MCF 10A (cell line): ENCODE measurements at regions of chr1 and their contacts with region 1.

Region 1: GRCh38 chr1:13662493-13662892 is 37.5 kb upstream of the PRDM2 start:
- DNase-seq: peak; percentile 29
- H3K4me3 Mint-ChIP-seq: no peak overlapping the region
- H3K27ac Mint-ChIP-seq: peak overlapping the region; percentile 5
- H3K4me1 Mint-ChIP-seq: peaks cover 36% of the 10 kb centered on the region
- H3K27me3 Mint-ChIP-seq: no peaks in the 10 kb centered on the region
- CTCF ChIP-seq: no peak

Region 2: DNA sequence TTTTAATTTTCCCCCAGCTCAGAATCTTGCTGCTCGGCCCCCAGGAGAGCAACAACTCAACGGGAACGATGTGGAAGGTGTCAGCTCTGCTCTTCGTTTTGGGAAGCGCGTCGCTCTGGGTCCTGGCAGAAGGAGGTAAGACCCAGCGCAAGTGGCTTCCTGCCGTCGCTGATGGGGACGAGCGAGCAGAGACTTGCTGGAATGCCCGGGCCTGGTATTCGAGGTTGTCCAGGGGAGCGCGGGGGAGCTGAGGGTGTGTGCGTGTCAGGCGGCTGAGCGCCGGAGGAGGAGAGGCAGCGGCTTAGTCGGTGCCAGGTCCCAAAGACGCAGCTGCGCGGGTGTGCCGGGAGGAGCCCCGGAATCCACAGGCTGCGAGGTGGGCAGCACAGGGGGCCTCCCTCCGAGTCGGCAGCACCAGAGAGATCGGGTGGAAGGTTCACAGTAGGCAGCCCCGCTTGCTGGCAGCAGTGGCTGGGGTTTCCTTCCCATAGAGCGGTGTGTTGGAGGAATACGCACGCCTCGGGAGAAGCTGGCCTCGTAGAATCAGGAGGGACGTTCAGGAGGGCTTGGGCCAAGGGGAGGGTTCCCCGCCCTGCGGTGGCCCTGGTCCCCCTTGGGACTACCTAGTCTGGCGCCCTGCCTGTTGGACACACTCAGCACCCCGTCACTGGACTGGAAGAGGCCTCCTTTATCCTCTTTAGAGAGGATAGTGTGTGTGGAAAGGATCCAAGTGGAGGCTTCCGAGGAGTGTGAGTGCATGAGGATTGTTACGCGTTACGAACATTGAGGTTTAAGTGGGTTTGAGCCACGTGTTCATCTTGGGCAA is 78.3 kb before region 1 on chr1:
- CTCF ChIA-PET with region 1: interaction called, 3 read pairs
- POLR2A ChIA-PET with region 1: interaction called, 18 read pairs
- intact Hi-C with region 1: no loop called
- DNase-seq: peak; percentile 52
- H3K4me3 Mint-ChIP-seq: peak overlapping the region; percentile 85
- H3K27ac Mint-ChIP-seq: peak overlapping the region; percentile 89
- H3K4me1 Mint-ChIP-seq: peaks cover 15% of the 10 kb centered on the region
- H3K27me3 Mint-ChIP-seq: no peaks in the 10 kb centered on the region
- CTCF ChIP-seq: no peak

Region 3: GRCh38 chr1:13605159-13605558 is 57.3 kb before region 1 on chr1:
- CTCF ChIA-PET with region 1: interaction called, 5 read pairs
- POLR2A ChIA-PET with region 1: interaction called, 23 read pairs
- intact Hi-C with region 1: no loop called
- DNase-seq: peak; percentile 94
- H3K4me3 Mint-ChIP-seq: no peak overlapping the region
- H3K27ac Mint-ChIP-seq: peak overlapping the region; percentile 81
- H3K4me1 Mint-ChIP-seq: peaks cover 38% of the 10 kb centered on the region
- H3K27me3 Mint-ChIP-seq: no peaks in the 10 kb centered on the region
- CTCF ChIP-seq: no peak

Region 4: DNA sequence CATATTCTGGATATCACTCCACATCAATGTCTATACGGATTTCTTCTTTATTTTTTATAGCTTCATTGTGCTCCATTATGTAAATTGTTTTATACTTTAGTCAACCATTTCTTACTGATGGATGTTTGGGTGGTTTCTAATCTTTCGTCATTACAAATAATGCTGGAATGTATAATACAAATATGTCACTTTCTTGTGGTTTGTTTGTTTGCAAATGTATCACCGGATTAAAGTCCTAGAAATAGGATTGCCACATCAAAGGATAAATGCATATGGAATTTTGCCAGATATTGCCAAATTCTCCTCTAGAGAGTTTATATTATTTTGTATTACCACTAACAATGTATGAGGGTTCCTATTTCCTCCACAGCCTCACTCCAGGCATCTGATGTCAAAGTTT is 11.2 kb before region 1 on chr1:
- CTCF ChIA-PET with region 1: interaction called, 4 read pairs
- POLR2A ChIA-PET with region 1: interaction called, 18 read pairs
- intact Hi-C with region 1: no loop called
- DNase-seq: peak; percentile 89
- H3K4me3 Mint-ChIP-seq: no peak overlapping the region
- H3K27ac Mint-ChIP-seq: no peak overlapping the region
- H3K4me1 Mint-ChIP-seq: peaks cover 15% of the 10 kb centered on the region
- H3K27me3 Mint-ChIP-seq: no peaks in the 10 kb centered on the region
- CTCF ChIP-seq: no peak

Region 5: DNA sequence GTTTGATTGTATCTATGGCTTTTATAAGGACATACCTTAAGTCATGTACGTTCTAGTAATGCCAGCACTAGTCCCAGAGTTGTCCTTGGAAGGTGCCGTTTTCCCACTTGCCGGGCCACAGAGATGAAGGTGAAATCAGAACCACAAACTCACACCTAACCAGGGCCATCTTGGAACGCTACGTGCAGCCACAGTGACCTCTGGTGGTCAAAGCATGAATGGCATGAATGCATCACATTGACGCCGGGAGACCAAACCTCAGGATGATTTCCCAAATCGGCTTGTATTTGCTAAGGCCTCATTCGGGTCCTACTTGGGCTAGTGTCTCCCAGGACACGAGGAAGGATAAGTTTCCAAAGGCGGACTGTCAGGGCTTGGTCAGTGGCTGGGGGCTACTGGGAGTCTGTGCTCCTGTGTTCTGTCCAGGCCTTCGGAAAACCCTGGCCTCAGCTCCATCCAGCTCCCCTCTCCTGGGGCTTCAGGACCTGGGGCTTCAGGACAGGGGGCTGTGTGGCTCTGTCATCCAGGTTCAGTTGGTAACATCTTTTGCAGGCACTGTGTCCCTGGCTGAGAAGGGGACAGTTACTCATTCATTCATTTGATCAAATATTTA is 298.0 kb after region 1 on chr1:
- CTCF ChIA-PET with region 1: interaction called, 18 read pairs
- POLR2A ChIA-PET with region 1: no interaction called
- intact Hi-C with region 1: loop called (anchors 1 kb)
- DNase-seq: peak; percentile 79
- H3K4me3 Mint-ChIP-seq: no peak overlapping the region
- H3K27ac Mint-ChIP-seq: no peak overlapping the region
- H3K4me1 Mint-ChIP-seq: peaks cover 14% of the 10 kb centered on the region
- H3K27me3 Mint-ChIP-seq: no peaks in the 10 kb centered on the region
- CTCF ChIP-seq: peak; percentile 93